ENCODE measurements at regions of chr7 and their contacts with region 1.

Region 1: GRCh38 chr7:5636914-5637313 is 144.5 kb downstream of the RNF216 start:
- DNase-seq: peak; percentile 44 to 93
- H3K4me3 ChIP-seq: peak overlapping the region in 1 of 2 donors; percentile 5
- H3K27ac ChIP-seq: peak overlapping the region; percentile 1 to 71
- H3K4me1 ChIP-seq: peaks cover 24 to 32% of the 10 kb centered on the region in 2 donors
- H3K27me3 ChIP-seq: no peaks in the 10 kb centered on the region
- CTCF ChIP-seq: no peak

Region 2: GRCh38 chr7:5248201-5248885 is 388.6 kb before region 1 on chr7:
- intact Hi-C with region 1: no loop called
- DNase-seq: no peak
- H3K4me3 ChIP-seq: no peak overlapping the region
- H3K27ac ChIP-seq: no peak overlapping the region
- H3K4me1 ChIP-seq: no peaks in the 10 kb centered on the region
- H3K27me3 ChIP-seq: no peaks in the 10 kb centered on the region
- CTCF ChIP-seq: no peak

Region 3: GRCh38 chr7:5596046-5596895 is 40.6 kb before region 1 on chr7:
- intact Hi-C with region 1: loop called (anchors 2 kb)
- DNase-seq: peak; percentile 64 to 94
- H3K4me3 ChIP-seq: peak overlapping the region; percentile 77 to 79
- H3K27ac ChIP-seq: peak overlapping the region; percentile 79 to 87
- H3K4me1 ChIP-seq: peaks cover 7 to 33% of the 10 kb centered on the region in 2 donors
- H3K27me3 ChIP-seq: no peaks in the 10 kb centered on the region
- CTCF ChIP-seq: no peak

Region 4: DNA sequence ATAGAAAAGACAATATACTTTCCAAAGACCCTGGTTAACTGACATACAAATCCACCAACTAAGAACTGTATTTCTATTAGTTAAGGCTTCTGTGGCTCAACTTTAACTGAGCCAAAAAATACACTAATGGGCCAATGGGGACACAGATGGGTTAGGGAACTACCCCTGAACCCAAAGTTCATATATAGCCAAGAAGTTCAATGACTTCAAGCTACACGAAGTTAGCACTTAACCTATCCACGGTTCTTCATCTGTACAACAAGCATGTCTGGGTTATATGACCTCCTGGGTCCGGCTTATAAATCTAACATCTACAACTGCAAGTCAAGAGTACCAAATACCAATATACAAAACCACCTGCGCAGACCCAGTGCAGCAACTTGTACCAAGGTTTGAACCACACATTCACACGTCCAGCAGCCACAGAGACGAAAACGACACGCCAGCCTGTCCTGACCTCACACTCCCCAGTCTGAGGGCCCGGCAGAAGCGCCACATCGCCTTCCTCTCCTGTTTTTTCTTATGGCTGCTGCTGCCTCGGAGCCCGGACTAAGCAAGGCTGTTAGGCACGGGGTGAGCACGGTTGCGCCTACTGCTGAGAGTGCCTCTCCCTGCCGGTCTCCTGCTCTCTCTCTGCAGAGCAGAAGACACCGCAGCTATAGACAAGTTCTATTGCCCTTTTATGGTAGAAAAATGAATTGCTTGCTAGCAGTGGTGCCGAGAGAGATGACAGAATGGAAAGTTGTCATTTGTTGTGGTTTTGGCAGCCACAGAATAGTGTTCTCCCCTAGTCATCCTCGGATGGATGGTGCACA is 58.2 kb after region 1 on chr7:
- intact Hi-C with region 1: loop called (anchors 5 kb)
- DNase-seq: peak in 1 of 2 donors; percentile 87
- H3K4me3 ChIP-seq: peak overlapping the region; percentile 35 to 62
- H3K27ac ChIP-seq: peak overlapping the region; percentile 94
- H3K4me1 ChIP-seq: peaks cover 46 to 65% of the 10 kb centered on the region in 2 donors
- H3K27me3 ChIP-seq: no peaks in the 10 kb centered on the region
- CTCF ChIP-seq: no peak

Measured in ascending aorta (tissue), 2 donors.